ENCODE measurements at regions of chr19 and their contacts with region 1.

Region 1: DNA sequence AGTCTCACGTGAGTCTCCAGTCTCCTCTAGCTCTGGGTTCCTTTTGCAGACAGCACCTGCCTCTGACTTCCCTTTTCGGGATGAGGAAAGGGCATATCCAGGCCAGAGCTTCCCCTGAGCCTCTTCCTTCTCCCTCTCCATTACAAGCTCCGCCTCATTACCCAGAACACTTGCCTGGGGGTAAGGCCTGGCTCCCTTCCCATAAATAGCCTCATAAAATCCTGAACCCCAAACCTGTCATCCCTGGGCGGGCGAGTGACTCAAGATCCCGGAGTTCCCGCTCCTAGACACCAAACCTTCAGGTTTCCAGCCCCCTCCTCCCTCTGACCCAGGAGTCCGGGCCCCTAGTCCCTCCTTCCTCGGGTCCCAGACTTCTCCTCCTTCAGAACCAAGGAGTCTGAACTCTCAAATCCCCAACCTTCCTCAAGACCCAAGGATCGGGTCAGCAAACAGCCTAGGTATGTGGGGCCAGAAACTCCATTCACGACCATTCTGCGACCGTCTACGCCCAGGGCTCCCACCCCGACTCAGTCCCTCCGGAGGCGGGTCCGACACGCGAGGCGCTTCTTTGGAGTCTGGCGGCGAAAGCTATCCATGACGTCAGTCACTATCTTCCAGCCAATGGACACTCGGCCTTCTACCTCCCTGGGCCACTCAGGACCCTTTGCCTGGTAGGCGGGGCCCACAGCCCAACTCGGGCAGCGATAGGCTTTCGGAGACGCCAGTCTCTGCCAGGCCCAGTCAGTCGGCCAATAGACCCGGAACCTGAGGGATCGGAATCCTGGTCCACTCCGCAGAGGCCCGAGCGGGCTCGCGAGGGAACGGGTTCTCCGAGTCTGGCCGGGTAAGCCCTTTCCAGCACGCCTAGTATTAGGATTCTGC is 6.5 kb upstream of the CNFN start:
- DNase-seq: peak; percentile 98
- H3K4me3 Mint-ChIP-seq: peak overlapping the region; percentile 92
- H3K27ac Mint-ChIP-seq: peak overlapping the region; percentile 76
- H3K4me1 Mint-ChIP-seq: peaks cover 36% of the 10 kb centered on the region
- H3K27me3 Mint-ChIP-seq: peaks cover 8% of the 10 kb centered on the region

Region 2: GRCh38 chr19:42330241-42330711 is 66.3 kb before region 1 on chr19:
- CTCF ChIA-PET with region 1: no interaction called
- POLR2A ChIA-PET with region 1: no interaction called
- DNase-seq: no peak
- H3K4me3 Mint-ChIP-seq: no peak overlapping the region
- H3K27ac Mint-ChIP-seq: no peak overlapping the region
- H3K4me1 Mint-ChIP-seq: peaks cover 13% of the 10 kb centered on the region
- H3K27me3 Mint-ChIP-seq: peaks cover under 1% of the 10 kb centered on the region

Region 3: DNA sequence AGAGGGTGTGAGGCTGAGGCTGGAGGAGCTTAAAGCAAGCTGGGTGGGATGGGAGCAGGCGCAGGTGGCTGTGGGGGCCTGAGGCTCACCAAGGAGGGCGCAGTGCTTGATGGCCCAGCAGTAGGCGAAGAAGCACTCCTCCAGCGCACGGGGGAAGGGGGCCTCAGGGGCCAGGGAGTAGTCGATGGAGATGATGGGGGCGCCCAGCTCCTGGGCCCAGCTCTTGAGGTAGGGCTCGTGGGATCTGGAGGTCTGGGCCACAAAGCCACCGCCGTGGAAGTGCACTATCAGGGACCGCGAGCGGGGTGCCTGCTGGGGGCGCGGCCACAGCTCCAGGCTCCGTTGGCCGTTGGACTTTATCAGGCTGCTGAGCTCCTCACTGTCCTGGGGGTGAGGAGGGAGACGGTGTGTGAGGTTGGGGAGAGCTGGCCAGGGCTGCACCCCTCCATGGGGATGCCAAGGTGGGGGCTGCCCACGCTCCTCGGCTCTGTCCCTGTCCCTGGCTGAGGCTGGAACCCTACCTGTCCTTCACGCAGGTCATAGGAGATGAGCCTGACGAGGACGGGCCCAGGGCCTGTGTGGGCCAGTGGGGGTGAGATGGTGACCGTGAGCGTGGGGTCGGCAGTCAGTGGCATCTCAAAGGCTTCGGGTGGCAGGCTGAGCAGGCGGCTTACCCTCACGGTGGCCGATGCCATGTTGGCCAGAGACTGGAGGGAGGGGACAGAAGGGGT is 10.6 kb after region 1 on chr19:
- CTCF ChIA-PET with region 1: no interaction called
- POLR2A ChIA-PET with region 1: interaction called, 10 read pairs
- DNase-seq: no peak
- H3K4me3 Mint-ChIP-seq: no peak overlapping the region
- H3K27ac Mint-ChIP-seq: no peak overlapping the region
- H3K4me1 Mint-ChIP-seq: peaks cover 5% of the 10 kb centered on the region
- H3K27me3 Mint-ChIP-seq: no peaks in the 10 kb centered on the region